Stomach (tissue), 19 donors: ENCODE measurements at regions of chr5 and their contacts with region 1.

Region 1: GRCh38 chr5:173972925-173973615 is 15.9 kb upstream of the C5orf47 start:
- DNase-seq: peak; percentile 86 to 94
- H3K4me3 ChIP-seq: peak overlapping the region; percentile 37 to 54 (median 48)
- H3K27ac ChIP-seq: peak overlapping the region; percentile 7 to 68 (median 46)
- H3K4me1 ChIP-seq: peaks cover 7 to 15% (median 14%) of the 10 kb centered on the region in 4 donors
- H3K27me3 ChIP-seq: no peaks in the 10 kb centered on the region
- CTCF ChIP-seq: peak in 6 of 7 experiments; percentile 65 to 94 (median 87)
- EP300 ChIP-seq: no peak
- POLR2A ChIP-seq: no peak

Region 2: GRCh38 chr5:173615884-173616576 is 357.0 kb before region 1 on chr5:
- intact Hi-C with region 1: loop called (anchors 5 kb)
- DNase-seq: peak; percentile 60 to 93
- H3K4me3 ChIP-seq: peak overlapping the region; percentile 87 to 99 (median 94)
- H3K27ac ChIP-seq: peak overlapping the region; percentile 93 to 98 (median 96)
- H3K4me1 ChIP-seq: peaks cover 34 to 61% (median 45%) of the 10 kb centered on the region in 4 donors
- H3K27me3 ChIP-seq: no peaks in the 10 kb centered on the region
- CTCF ChIP-seq: peak in 5 of 7 experiments; percentile 48 to 60 (median 55)
- EP300 ChIP-seq: no peak
- POLR2A ChIP-seq: no peak